ENCODE measurements at regions of chr12 and their contacts with region 1.

Region 1: GRCh38 chr12:130826149-130826801 is 12.8 kb downstream of the STX2 start:
- DNase-seq: peak; percentile 57 to 85 (median 68)
- ATAC-seq: peak; percentile 100
- H3K4me3 ChIP-seq: no peak overlapping the region
- H3K4me3 Mint-ChIP-seq: no peak overlapping the region
- H3K27ac ChIP-seq: no peak overlapping the region
- H3K27ac Mint-ChIP-seq: no peak overlapping the region
- H3K4me1 ChIP-seq: peaks cover 7% of the 10 kb centered on the region
- H3K4me1 Mint-ChIP-seq: peaks cover 11% of the 10 kb centered on the region
- H3K27me3 ChIP-seq: no peaks in the 10 kb centered on the region
- H3K27me3 Mint-ChIP-seq: no peaks in the 10 kb centered on the region
- CTCF ChIP-seq: peak; percentile 90

Region 2: DNA sequence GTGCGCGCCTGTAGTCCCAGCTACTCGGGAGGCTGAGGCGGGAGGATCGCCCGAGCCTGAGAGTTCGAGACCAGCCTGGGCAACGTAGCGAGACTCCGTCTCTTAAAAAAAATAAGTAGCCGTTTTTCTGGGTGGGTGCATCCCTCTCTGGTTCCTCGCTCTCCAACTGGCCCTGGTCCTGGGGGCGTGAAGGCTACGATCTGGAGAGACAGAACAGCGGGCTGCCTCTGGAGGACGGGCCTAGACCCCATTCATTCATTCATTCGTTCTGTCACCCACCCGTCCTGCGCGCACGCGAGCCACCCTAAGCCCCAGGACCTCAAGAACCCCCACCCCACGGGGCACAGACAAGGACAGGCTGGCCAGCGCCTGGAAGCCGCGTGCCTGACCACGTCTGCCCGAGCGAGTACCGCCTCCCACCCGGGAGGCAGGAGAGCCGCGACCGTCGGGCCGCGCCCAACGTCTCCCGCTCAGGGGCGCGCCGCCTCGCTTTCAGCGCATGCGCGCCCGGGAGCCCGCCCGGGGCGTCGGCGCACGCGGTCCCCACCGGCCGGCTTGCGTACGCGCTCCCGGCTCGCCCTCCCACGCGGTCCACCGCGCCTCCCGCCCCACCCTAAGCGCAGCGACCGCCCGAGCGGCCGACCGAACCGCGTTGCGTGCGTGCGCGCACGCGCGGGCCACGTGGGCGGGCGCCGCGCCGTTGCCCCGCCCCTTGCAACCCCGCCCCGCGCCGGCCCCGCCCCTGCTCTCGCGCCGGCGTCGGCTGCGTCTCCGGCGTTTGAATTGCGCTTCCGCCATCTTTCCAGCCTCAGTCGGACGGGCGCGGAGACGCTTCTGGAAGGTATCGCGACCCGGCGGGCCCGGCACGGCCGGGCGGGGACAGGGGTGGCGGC is 45.3 kb after region 1 on chr12 and contains the start of gene RAN:
- CTCF ChIA-PET with region 1: interaction called, 11 read pairs
- POLR2A ChIA-PET with region 1: interaction called, 6 read pairs
- intact Hi-C with region 1: no loop called
- DNase-seq: peak; percentile 79 to 98 (median 90)
- ATAC-seq: peak; percentile 68
- H3K4me3 ChIP-seq: peak within 1 kb of the TSS; percentile 84
- H3K4me3 Mint-ChIP-seq: peak within 1 kb of the TSS; percentile 93
- H3K27ac ChIP-seq: peak within 1 kb of the TSS; percentile 79 to 89
- H3K27ac Mint-ChIP-seq: peak within 1 kb of the TSS; percentile 95
- H3K4me1 ChIP-seq: peaks cover 56% of the 10 kb centered on the region
- H3K4me1 Mint-ChIP-seq: peaks cover 65% of the 10 kb centered on the region
- H3K27me3 ChIP-seq: no peaks in the 10 kb centered on the region
- H3K27me3 Mint-ChIP-seq: no peaks in the 10 kb centered on the region
- CTCF ChIP-seq: no peak
- total RNA-seq, gene RAN: 278 to 302 TPM

Region 3: GRCh38 chr12:131159660-131160059 is 333.4 kb after region 1 on chr12:
- CTCF ChIA-PET with region 1: no interaction called
- POLR2A ChIA-PET with region 1: no interaction called
- intact Hi-C with region 1: no loop called
- DNase-seq: no peak
- ATAC-seq: no peak
- H3K4me3 ChIP-seq: no peak overlapping the region
- H3K4me3 Mint-ChIP-seq: no peak overlapping the region
- H3K27ac ChIP-seq: no peak overlapping the region
- H3K27ac Mint-ChIP-seq: no peak overlapping the region
- H3K4me1 ChIP-seq: no peaks in the 10 kb centered on the region
- H3K4me1 Mint-ChIP-seq: no peaks in the 10 kb centered on the region
- H3K27me3 ChIP-seq: no peaks in the 10 kb centered on the region
- H3K27me3 Mint-ChIP-seq: peaks cover 14% of the 10 kb centered on the region
- CTCF ChIP-seq: no peak

Measured in CD4-positive, alpha-beta T cell (primary cell).